ENCODE measurements at regions of chr11 and their contacts with region 1.

Region 1: GRCh38 chr11:33329705-33330329 is 72.6 kb downstream of the HIPK3 start:
- DNase-seq: peak in 1 of 2 donors; percentile 22
- H3K4me3 ChIP-seq: no peak overlapping the region
- CTCF ChIP-seq: peak in 1 of 3 donors; percentile 18
- POLR2A ChIP-seq: no peak

Region 2: DNA sequence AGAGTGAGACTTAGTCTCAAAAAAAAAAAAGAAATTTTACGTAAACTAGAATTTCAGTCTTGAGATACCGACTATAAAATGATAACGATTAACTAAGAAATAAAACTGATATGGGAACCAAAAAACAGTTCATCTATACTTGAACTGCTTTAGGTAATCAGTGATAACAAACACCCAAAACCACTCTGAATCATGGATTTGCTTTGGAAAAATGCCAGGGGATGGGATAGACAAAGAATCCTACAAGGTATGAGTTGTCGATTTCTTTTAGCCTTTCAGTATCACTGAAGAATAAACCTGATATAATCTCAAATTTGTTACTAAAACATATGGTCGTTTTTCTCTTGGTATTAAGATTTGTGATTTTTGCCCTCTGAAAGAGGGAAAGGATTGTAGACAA is 182.3 kb before region 1 on chr11:
- intact Hi-C with region 1: no loop called
- DNase-seq: no peak
- H3K4me3 ChIP-seq: no peak overlapping the region
- CTCF ChIP-seq: no peak
- POLR2A ChIP-seq: no peak

Region 3: GRCh38 chr11:33161120-33162005 is 168.5 kb before region 1 on chr11 and contains the start of gene CSTF3:
- intact Hi-C with region 1: loop called (anchors 10 kb)
- DNase-seq: peak; percentile 100
- H3K4me3 ChIP-seq: peak within 1 kb of the TSS; percentile 74
- CTCF ChIP-seq: peak in 1 of 3 donors; percentile 63
- POLR2A ChIP-seq: no peak
- total RNA-seq, gene CSTF3: 7.1 to 9.8 (median 8.4) TPM

Region 4: GRCh38 chr11:33389635-33390034 is 59.8 kb after region 1 on chr11:
- intact Hi-C with region 1: no loop called
- DNase-seq: no peak
- H3K4me3 ChIP-seq: no peak overlapping the region
- CTCF ChIP-seq: no peak
- POLR2A ChIP-seq: no peak

Region 5: GRCh38 chr11:33598426-33599069 is 268.7 kb after region 1 on chr11:
- intact Hi-C with region 1: no loop called
- DNase-seq: no peak
- H3K4me3 ChIP-seq: no peak overlapping the region
- CTCF ChIP-seq: no peak
- POLR2A ChIP-seq: no peak

Measured in lower leg skin (tissue), 4 donors.